ENCODE measurements at regions of chr11 and their contacts with region 1.

Region 1: GRCh38 chr11:78100676-78101456 is 21.2 kb upstream of the NDUFC2 start:
- DNase-seq: no peak
- H3K4me3 ChIP-seq: no peak overlapping the region
- H3K27me3 ChIP-seq: no peaks in the 10 kb centered on the region
- CTCF ChIP-seq: no peak

Region 2: DNA sequence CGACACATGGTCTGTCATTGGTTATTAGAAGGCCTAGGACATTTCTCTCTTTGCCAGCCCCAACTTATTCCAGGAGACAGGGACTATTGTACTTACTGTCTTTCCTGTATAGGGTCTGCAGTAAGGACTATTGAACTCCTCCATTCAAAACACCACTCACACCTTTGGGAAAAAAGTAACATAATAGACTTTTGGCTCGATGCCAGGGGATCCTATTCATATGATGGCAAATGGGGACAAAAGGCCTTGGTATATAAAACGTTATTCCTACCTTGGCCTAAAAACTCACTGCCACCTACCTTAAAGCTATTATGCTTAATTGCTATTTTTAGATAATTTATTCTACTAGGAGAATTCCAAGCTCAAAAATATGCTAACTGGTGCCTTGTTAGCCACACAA is 14.9 kb before region 1 on chr11:
- CTCF ChIA-PET with region 1: no interaction called
- POLR2A ChIA-PET with region 1: no interaction called
- DNase-seq: no peak
- H3K4me3 ChIP-seq: no peak overlapping the region
- H3K27me3 ChIP-seq: no peaks in the 10 kb centered on the region
- CTCF ChIP-seq: no peak

Region 3: DNA sequence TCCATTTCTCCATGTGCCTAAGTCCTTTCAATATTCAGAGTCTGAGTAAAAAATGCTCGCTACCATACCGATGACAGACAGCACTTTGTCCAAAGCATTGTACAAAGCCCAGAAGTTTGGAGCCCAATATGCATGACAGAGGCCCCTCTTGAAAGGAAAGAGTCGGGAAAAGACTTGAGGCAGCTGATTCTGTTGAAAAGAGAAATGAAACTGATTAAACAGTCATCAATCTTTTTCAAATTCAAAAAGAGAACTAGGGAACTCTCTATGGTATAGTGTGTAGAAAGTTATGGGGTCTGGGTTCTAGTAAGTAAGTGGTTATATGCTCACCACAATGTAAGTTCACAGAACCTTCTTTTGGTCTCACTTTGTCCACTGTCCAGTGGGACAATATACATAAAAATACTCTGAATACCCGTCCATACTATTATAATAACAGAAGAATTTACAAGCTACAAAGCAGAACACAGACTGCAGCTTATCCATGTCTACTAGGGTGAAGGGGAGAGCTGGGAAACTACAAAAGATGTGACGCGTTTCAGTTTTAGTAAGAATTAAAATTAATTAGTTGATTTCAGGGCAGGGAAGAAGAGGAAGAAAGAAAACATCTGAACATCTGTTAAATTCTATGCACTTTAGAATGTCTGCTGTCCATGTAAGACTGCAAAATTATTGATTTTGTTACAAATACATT is 11.9 kb after region 1 on chr11:
- CTCF ChIA-PET with region 1: no interaction called
- POLR2A ChIA-PET with region 1: interaction called, 12 read pairs
- DNase-seq: no peak
- H3K4me3 ChIP-seq: no peak overlapping the region
- H3K27me3 ChIP-seq: no peaks in the 10 kb centered on the region
- CTCF ChIP-seq: no peak